Activated naive CD4-positive, alpha-beta T cell treated with anti-CD3 and anti-CD28 coated beads for 36 hours (primary cell): ENCODE measurements at regions of chr2 and their contacts with region 1.

Region 1: GRCh38 chr2:229825476-229825875 is 96.3 kb downstream of the TRIP12 start:
- DNase-seq: no peak
- H3K4me3 Mint-ChIP-seq: no peak overlapping the region
- H3K27ac Mint-ChIP-seq: no peak overlapping the region
- H3K4me1 Mint-ChIP-seq: peaks cover 21% of the 10 kb centered on the region
- H3K27me3 Mint-ChIP-seq: no peaks in the 10 kb centered on the region

Region 2: GRCh38 chr2:229852565-229852964 is 27.1 kb after region 1 on chr2:
- CTCF ChIA-PET with region 1: interaction called, 4 read pairs
- intact Hi-C with region 1: loop called (anchors 1 kb)
- DNase-seq: peak; percentile 66
- H3K4me3 Mint-ChIP-seq: no peak overlapping the region
- H3K27ac Mint-ChIP-seq: peak overlapping the region; percentile 0
- H3K4me1 Mint-ChIP-seq: peaks cover 60% of the 10 kb centered on the region
- H3K27me3 Mint-ChIP-seq: no peaks in the 10 kb centered on the region

Region 3: DNA sequence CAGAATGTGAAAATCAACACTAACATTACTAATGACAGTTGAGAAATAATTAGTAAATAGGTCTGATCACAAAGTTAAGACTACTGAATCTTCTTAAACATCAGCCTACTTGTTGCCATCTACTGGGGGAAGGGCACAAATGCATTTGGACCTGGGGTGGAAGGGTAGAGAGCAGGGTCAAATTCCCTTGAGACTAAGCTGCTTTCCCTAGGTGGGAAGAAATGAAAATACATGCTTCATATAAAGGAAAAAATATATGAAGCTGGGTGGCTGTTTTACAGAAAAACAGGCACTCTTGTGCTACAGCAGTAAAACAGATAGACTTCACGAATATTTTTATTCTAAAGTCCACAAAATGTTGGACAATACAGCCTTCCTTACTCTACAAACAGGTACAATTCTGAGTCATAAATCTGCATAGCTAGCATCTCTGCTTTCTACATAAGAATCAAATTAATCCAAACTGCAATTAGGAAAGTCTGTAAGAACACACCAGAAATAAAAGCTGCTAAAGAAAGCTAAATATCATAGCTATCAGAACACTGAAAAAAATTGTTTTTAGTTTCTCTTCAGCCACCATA is 85.4 kb after region 1 on chr2:
- CTCF ChIA-PET with region 1: interaction called, 7 read pairs
- intact Hi-C with region 1: loop called (anchors 1 kb)
- DNase-seq: peak; percentile 36
- H3K4me3 Mint-ChIP-seq: no peak overlapping the region
- H3K27ac Mint-ChIP-seq: peak overlapping the region; percentile 7
- H3K4me1 Mint-ChIP-seq: peaks cover 53% of the 10 kb centered on the region
- H3K27me3 Mint-ChIP-seq: no peaks in the 10 kb centered on the region

Region 4: DNA sequence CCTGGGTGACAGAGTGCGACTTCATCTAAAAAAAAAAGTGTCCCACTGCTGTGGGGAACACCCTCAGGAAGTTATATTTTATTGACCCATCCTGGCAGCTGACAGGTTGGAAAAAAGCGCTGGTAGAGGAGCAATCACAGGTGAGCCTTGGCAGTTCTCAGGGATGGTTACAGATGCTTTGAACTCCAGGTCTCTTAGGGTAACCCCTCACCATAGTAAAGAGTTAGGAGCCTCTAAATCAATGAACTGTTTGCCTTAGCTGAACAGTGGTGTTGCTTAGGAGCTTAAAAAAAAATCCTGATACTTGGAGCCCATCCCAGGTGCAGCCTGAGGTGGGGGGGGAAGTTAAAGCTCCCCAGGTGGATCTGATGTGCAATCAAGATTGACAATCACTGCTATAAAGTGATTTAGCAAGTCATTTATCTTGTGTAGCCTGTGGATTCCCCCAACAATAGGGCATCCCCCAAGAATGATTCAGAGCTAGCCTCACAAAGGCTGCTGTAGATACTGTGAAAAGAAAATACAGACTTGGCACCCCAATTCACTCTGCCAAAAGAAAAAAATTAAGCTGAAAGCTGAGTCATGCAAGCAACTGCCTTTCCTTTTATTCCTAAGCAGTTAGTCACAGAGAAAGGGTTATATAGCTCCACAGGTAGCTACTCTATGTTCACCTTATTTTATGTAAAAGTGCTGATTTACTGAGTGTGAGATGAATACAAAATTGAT is 228.4 kb after region 1 on chr2:
- CTCF ChIA-PET with region 1: no interaction called
- intact Hi-C with region 1: loop called (anchors 1 kb)
- DNase-seq: peak; percentile 67
- H3K4me3 Mint-ChIP-seq: no peak overlapping the region
- H3K27ac Mint-ChIP-seq: no peak overlapping the region
- H3K4me1 Mint-ChIP-seq: peaks cover 17% of the 10 kb centered on the region
- H3K27me3 Mint-ChIP-seq: no peaks in the 10 kb centered on the region

Region 5: GRCh38 chr2:230765611-230766300 is 940.3 kb after region 1 on chr2:
- CTCF ChIA-PET with region 1: no interaction called
- intact Hi-C with region 1: loop called (anchors 5 kb)
- DNase-seq: no peak
- H3K4me3 Mint-ChIP-seq: no peak overlapping the region
- H3K27ac Mint-ChIP-seq: peak overlapping the region; percentile 85
- H3K4me1 Mint-ChIP-seq: peaks cover 64% of the 10 kb centered on the region
- H3K27me3 Mint-ChIP-seq: no peaks in the 10 kb centered on the region